Caco-2 (cell line): ENCODE measurements at regions of chr7 and their contacts with region 1.

Region 1: DNA sequence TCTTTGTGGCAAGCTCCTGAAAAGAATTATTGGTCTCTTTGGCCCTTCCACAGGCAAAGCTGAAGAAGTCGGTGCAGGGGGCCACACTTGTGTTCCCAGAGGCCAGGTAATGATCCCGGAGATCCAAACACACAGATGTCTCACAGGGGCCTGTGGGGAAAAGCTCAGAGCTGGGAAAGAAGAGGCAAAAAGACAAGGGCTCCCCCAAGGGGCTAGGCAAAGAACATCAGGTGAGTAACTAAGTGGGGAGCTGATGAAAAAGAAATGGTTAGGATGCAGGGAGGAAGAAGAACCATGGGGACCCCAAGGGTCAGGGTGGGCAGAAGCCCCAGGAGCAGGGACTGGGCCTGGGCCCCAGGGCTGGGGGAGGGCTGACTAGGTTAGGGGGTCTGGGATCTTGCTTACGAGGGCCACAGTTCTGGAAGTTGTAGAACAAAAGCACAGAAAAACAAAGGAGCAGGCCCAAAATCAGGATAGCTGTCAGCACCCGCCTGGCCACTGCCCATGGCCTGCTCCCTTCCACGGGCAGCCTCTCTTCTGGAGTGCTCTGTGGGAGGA is 1.1 kb downstream of the KEL start:
- DNase-seq: peak in 1 of 2 experiments; percentile 35
- H3K4me3 ChIP-seq: no peak overlapping the region
- H3K4me3 Mint-ChIP-seq: no peak overlapping the region
- H3K27ac Mint-ChIP-seq: no peak overlapping the region
- H3K4me1 ChIP-seq: peaks cover 30% of the 10 kb centered on the region
- H3K4me1 Mint-ChIP-seq: peaks cover 39% of the 10 kb centered on the region
- H3K27me3 ChIP-seq: no peaks in the 10 kb centered on the region
- H3K27me3 Mint-ChIP-seq: peaks cover 6% of the 10 kb centered on the region
- CTCF ChIP-seq: peak; percentile 28 to 57

Region 2: GRCh38 chr7:142853739-142854371 is 107.2 kb before region 1 on chr7:
- CTCF ChIA-PET with region 1: interaction called, 3 read pairs
- POLR2A ChIA-PET with region 1: no interaction called
- intact Hi-C with region 1: loop called (anchors 1 kb)
- DNase-seq: peak; percentile 64 to 75
- H3K4me3 ChIP-seq: peak overlapping the region; percentile 76
- H3K4me3 Mint-ChIP-seq: peak overlapping the region; percentile 91
- H3K27ac Mint-ChIP-seq: peak overlapping the region; percentile 47
- H3K4me1 ChIP-seq: peaks cover 6% of the 10 kb centered on the region; the same call in 1 of the 2 replicates
- H3K4me1 Mint-ChIP-seq: peaks cover 7% of the 10 kb centered on the region
- H3K27me3 ChIP-seq: no peaks in the 10 kb centered on the region; the same call in none of the 2 replicates
- H3K27me3 Mint-ChIP-seq: peaks cover 14% of the 10 kb centered on the region
- CTCF ChIP-seq: peak; percentile 83 to 85

Region 3: DNA sequence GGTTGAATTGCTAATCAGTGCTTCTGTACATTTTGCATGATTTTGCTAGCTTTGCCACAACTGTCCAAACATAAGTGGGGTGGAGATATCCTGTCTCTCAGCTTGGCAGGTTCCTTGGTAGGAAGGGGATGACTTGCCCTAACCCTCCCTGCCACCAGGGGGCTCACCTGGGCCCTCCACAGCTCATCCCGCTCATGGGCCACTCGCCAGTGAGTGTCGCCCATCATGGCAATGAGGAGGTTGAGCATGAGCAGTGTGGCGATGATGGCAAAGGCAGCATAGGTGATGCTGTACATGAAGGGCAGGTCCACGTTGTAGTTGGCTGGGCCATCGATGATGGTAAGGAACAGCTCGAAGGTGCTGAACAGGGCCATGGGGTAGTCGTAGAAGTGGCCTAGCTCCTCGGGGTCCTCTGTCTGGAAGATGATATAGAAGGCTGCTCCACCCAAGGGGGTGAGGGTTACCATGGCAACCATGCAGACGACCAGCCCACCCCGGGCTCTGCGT is 87.7 kb before region 1 on chr7:
- CTCF ChIA-PET with region 1: interaction called, 19 read pairs
- POLR2A ChIA-PET with region 1: no interaction called
- intact Hi-C with region 1: no loop called
- DNase-seq: peak; percentile 44 to 60
- H3K4me3 ChIP-seq: no peak overlapping the region
- H3K4me3 Mint-ChIP-seq: no peak overlapping the region
- H3K27ac Mint-ChIP-seq: no peak overlapping the region
- H3K4me1 ChIP-seq: no peaks in the 10 kb centered on the region
- H3K4me1 Mint-ChIP-seq: no peaks in the 10 kb centered on the region
- H3K27me3 ChIP-seq: no peaks in the 10 kb centered on the region
- H3K27me3 Mint-ChIP-seq: no peaks in the 10 kb centered on the region
- CTCF ChIP-seq: peak; percentile 59 to 64

Region 4: DNA sequence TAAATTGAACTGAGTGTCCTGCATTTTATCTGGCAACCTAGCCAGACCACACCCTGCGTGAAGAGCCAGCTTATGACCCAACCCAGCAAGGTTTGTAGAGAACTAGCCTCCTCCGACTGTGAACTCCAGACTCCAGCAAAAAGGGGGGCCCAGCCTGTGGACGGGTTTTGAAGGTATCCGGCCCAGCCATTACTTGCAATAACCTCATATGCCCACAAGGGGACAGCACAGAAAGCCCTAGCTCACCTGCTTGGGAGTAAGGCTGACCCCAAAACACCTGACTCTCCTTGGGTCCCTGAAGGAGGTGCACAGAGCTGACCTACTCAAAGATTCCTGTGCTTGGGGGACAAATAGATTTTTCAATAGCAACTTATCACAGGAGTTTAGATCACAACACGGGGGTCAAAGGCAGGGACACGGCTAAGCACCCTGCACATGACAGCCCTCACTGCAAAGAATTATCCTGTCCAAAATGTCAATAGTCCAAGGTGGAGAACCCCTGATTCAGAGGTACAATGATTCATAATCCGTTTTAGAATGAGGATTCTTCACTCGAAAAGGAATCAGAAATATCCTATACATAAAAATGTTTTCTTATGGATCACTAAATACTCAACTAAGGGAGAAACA is 80.0 kb before region 1 on chr7:
- CTCF ChIA-PET with region 1: interaction called, 20 read pairs
- POLR2A ChIA-PET with region 1: no interaction called
- intact Hi-C with region 1: loop called (anchors 2 kb)
- DNase-seq: peak; percentile 53 to 54
- H3K4me3 ChIP-seq: no peak overlapping the region
- H3K4me3 Mint-ChIP-seq: no peak overlapping the region
- H3K27ac Mint-ChIP-seq: no peak overlapping the region
- H3K4me1 ChIP-seq: peaks cover 20% of the 10 kb centered on the region
- H3K4me1 Mint-ChIP-seq: no peaks in the 10 kb centered on the region
- H3K27me3 ChIP-seq: no peaks in the 10 kb centered on the region
- H3K27me3 Mint-ChIP-seq: no peaks in the 10 kb centered on the region
- CTCF ChIP-seq: peak; percentile 91 to 92

Region 5: GRCh38 chr7:142901426-142902259 is 59.4 kb before region 1 on chr7:
- CTCF ChIA-PET with region 1: interaction called, 4 read pairs
- POLR2A ChIA-PET with region 1: no interaction called
- intact Hi-C with region 1: loop called (anchors 1 kb)
- DNase-seq: peak; percentile 46 to 63
- H3K4me3 ChIP-seq: no peak overlapping the region
- H3K4me3 Mint-ChIP-seq: peak overlapping the region; percentile 7
- H3K27ac Mint-ChIP-seq: peak overlapping the region; percentile 18
- H3K4me1 ChIP-seq: peaks cover 49% of the 10 kb centered on the region
- H3K4me1 Mint-ChIP-seq: peaks cover 32% of the 10 kb centered on the region
- H3K27me3 ChIP-seq: no peaks in the 10 kb centered on the region
- H3K27me3 Mint-ChIP-seq: no peaks in the 10 kb centered on the region
- CTCF ChIP-seq: no peak

Region 6: DNA sequence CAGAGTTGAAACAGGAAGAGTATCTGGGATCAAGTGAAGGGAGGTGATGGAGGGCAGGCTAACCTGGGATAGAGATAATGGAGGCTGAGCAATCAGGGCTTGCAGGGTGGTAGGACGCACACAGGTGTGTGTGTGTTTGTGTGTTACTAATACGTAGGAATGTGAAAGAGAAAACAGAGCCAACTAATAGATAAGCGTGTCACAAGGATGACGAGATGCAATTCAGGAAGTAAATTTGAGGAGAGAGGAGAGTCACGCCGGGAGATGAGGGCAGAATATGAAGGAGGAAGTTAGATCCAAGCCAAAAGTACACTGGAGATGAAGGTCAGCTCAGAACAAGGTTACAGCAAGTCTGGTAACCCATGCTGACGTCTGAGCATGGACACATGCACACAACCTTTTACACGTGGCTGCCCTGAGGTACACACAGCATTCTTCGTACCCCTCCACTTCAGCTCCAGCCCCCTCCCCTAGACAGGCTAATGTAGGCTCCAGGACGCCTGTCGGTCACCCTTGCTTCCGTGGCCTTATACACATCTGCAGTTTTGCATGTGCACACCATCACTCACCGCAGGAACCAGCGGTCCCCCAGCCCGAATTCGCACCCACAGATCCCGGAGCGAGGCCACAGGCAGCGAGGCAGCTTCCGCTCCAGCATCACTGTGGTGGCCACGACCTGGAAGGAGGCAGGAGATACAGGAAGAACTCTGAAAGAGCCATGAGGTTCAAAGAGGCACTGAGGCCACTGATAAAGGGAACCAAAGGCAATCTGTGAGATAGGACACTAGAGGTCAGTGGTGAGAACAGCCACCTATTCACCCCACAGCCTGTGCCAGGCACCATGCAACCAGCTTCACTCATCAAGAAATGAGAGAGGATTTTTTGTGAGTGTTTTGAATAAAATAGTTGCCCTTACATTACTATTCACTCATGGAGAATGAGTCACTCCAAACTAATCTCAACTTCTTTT is 51.8 kb before region 1 on chr7:
- CTCF ChIA-PET with region 1: interaction called, 3 read pairs
- POLR2A ChIA-PET with region 1: no interaction called
- intact Hi-C with region 1: loop called (anchors 1 kb)
- DNase-seq: no peak
- H3K4me3 ChIP-seq: no peak overlapping the region
- H3K4me3 Mint-ChIP-seq: no peak overlapping the region
- H3K27ac Mint-ChIP-seq: peak overlapping the region; percentile 7
- H3K4me1 ChIP-seq: peaks cover 49% of the 10 kb centered on the region
- H3K4me1 Mint-ChIP-seq: peaks cover 56% of the 10 kb centered on the region
- H3K27me3 ChIP-seq: no peaks in the 10 kb centered on the region
- H3K27me3 Mint-ChIP-seq: no peaks in the 10 kb centered on the region
- CTCF ChIP-seq: peak; percentile 28 to 33

Region 7: DNA sequence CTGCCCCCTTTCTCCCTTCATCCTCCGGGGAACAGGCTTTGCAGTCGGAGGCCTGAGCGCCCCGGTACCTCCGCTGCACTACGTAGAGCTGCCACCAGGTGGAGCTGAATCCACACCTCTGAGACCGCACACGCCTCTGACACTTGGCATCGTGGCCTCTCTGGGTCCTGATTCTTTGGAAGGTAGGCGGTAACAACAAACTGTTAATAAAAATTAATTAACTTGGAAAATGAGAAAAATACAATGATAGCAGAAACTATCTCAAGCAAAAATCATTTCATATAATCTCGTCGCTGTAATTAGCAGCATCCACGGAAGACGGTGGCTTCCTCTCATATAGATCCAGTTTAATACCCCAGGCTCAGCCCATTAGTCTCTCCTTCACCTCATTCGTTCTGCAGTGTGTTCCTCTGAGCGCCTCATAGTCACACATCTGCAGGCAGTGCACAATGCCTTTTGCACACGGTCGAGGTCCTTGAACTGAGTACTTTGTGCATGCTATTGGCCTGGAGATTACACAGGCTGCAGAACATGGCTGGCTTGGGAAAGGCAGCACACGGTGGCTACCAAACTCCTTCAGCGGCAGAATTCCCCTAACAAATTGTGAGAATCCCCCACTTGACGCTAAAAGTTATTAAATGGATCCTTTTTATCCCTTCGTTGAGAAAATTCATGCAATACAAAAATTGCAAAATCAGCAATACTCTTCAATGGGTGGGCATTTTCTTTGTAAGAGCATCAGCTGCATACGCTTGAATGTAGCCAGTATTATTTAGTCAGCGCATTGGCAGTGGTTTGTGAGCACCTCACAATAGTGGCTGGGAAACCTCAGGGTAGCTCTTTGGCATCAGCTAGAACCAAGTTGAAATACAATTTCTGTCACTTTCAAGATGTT is 47.2 kb after region 1 on chr7:
- CTCF ChIA-PET with region 1: interaction called, 7 read pairs
- POLR2A ChIA-PET with region 1: interaction called, 3 read pairs
- intact Hi-C with region 1: loop called (anchors 5 kb)
- DNase-seq: peak; percentile 71 to 85
- H3K4me3 ChIP-seq: no peak overlapping the region
- H3K4me3 Mint-ChIP-seq: no peak overlapping the region
- H3K27ac Mint-ChIP-seq: no peak overlapping the region
- H3K4me1 ChIP-seq: 0 out of 2 replicates have a peak, but pooled peaks cover 2% of the 10 kb centered on the region
- H3K4me1 Mint-ChIP-seq: peaks cover 4% of the 10 kb centered on the region
- H3K27me3 ChIP-seq: no peaks in the 10 kb centered on the region
- H3K27me3 Mint-ChIP-seq: peaks cover 14% of the 10 kb centered on the region
- CTCF ChIP-seq: peak; percentile 97 to 98